WTC11 (cell line): ENCODE measurements at regions of chr1 and their contacts with region 1.

Region 1: DNA sequence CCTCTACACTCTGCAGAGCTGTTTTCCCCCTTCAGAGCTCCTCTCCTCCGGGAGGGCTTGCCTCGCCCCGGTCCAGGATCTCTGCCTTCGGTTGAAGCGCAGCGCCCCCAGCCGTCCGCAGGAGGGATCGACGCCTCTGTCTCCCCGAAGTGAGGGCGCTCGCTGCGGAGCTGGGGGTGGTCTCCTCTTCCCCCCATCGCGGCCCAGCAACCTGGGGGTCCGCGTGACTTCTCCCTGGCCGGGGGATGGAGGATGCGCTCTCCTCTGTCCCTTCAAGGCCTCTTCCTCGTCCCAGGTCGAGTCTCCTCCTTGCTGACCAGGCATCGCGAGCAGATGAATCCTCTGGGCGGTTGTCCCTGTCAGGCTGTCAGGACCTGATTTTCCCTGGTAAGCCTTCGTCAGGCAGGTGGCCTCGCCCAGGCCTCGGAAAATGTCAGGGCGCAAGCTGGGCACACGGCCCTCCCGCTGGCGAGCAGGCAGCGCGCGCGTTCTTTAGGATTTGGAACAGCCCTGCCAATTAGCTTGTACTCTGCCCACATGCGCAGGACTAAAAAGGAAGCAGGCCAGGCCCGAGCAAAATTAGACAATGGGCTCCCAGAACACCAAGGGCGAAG is 90.5 kb downstream of the EDEM3 start:
- DNase-seq: peak; percentile 92
- ATAC-seq: peak; percentile 96
- H3K4me3 Mint-ChIP-seq: peak overlapping the region; percentile 67
- H3K27ac Mint-ChIP-seq: no peak overlapping the region
- H3K4me1 Mint-ChIP-seq: peaks cover 34% of the 10 kb centered on the region
- H3K27me3 Mint-ChIP-seq: peaks cover 8% of the 10 kb centered on the region
- CTCF ChIP-seq: peak; percentile 89

Region 2: GRCh38 chr1:184310157-184310806 is 353.9 kb before region 1 on chr1:
- CTCF ChIA-PET with region 1: interaction called, 15 read pairs
- POLR2A ChIA-PET with region 1: no interaction called
- DNase-seq: no peak
- ATAC-seq: no peak
- H3K4me3 Mint-ChIP-seq: no peak overlapping the region
- H3K27ac Mint-ChIP-seq: no peak overlapping the region
- H3K4me1 Mint-ChIP-seq: peaks cover 5% of the 10 kb centered on the region
- H3K27me3 Mint-ChIP-seq: no peaks in the 10 kb centered on the region
- CTCF ChIP-seq: no peak

Region 3: GRCh38 chr1:184416481-184416880 is 247.7 kb before region 1 on chr1:
- CTCF ChIA-PET with region 1: no interaction called
- POLR2A ChIA-PET with region 1: no interaction called
- DNase-seq: no peak
- ATAC-seq: no peak
- H3K4me3 Mint-ChIP-seq: no peak overlapping the region
- H3K27ac Mint-ChIP-seq: no peak overlapping the region
- H3K4me1 Mint-ChIP-seq: peaks cover 33% of the 10 kb centered on the region
- H3K27me3 Mint-ChIP-seq: no peaks in the 10 kb centered on the region
- CTCF ChIP-seq: no peak

Region 4: DNA sequence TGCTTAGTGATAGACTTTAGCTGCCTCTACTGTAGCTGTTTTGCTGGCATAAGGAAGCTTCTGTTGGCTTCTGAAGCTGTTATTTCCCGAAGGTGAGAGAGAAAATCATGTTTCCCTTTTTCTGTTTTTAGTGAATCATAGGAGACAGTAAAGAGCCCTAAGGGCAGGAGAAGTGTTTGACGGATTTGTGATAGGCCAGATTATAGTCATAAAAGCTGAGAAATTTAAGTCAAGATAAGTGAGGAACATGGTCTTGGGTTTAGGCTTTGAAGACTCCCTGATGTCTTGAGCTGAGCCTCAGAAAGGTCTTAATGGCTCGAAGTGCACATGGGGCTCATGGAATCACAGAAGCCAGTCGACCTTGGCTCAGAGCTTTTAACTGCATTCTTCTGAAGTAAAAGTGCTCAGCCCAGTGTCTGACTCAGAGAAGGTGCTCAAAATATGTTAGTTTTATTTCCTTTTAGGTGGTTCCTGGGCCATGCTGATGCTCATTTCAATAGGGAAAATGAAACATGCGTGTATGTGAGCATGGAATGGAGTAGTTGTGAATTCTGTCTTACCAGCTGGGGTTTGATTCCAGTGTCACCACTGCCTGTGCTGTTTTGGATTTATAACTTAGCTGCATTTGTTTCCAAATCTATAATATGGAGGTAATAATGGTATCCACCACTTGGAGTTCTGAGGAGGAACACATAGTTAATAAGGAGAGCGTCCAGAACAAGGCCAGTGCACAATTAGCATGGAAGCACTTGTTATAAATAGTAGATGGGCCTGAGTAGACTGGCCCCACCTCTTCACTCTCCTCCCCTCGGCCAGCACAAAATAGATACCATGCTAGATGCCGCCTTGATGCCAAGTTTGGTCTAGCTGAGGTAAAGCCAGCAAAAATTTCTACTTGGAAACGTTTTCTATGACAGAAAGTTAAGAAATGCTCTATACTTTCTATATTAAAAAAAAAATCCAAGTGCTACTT is 178.1 kb before region 1 on chr1:
- CTCF ChIA-PET with region 1: interaction called, 15 read pairs
- POLR2A ChIA-PET with region 1: no interaction called
- DNase-seq: no peak
- ATAC-seq: no peak
- H3K4me3 Mint-ChIP-seq: no peak overlapping the region
- H3K27ac Mint-ChIP-seq: peak overlapping the region; percentile 18; the same call in 1 of the 2 replicates
- H3K4me1 Mint-ChIP-seq: peaks cover 66% of the 10 kb centered on the region
- H3K27me3 Mint-ChIP-seq: no peaks in the 10 kb centered on the region
- CTCF ChIP-seq: no peak

Region 5: DNA sequence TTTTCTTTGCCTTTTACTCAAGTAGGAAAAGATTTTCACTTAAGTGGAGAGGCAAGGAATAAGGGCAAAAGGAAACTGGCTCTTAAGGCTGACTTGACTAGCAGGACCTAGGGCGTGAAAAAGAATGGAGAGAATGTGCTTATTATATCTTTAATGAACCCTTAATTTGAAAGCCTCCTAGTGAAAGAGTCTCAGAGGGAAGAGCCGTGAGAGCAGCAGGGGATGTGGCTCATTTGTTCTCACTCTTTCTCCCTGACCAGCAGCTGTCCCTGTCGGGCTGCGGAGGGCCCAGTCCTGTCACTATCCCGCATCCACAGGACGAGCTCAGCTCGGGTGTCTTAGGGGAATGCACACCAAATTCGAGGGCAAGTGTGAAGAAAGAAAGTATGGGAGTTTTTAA is 89.6 kb before region 1 on chr1:
- CTCF ChIA-PET with region 1: interaction called, 18 read pairs
- POLR2A ChIA-PET with region 1: no interaction called
- DNase-seq: peak; percentile 28
- ATAC-seq: peak; percentile 95
- H3K4me3 Mint-ChIP-seq: no peak overlapping the region
- H3K27ac Mint-ChIP-seq: peak overlapping the region; percentile 2; the same call in 1 of the 2 replicates
- H3K4me1 Mint-ChIP-seq: peaks cover 14% of the 10 kb centered on the region
- H3K27me3 Mint-ChIP-seq: no peaks in the 10 kb centered on the region
- CTCF ChIP-seq: no peak

Region 6: GRCh38 chr1:184620469-184620868 is 43.7 kb before region 1 on chr1:
- CTCF ChIA-PET with region 1: interaction called, 12 read pairs
- POLR2A ChIA-PET with region 1: interaction called, 10 read pairs
- DNase-seq: no peak
- ATAC-seq: no peak
- H3K4me3 Mint-ChIP-seq: no peak overlapping the region
- H3K27ac Mint-ChIP-seq: no peak overlapping the region
- H3K4me1 Mint-ChIP-seq: peaks cover 4% of the 10 kb centered on the region; the same call in 1 of the 2 replicates
- H3K27me3 Mint-ChIP-seq: no peaks in the 10 kb centered on the region
- CTCF ChIP-seq: no peak

Region 7: GRCh38 chr1:184677344-184677743 is 13.2 kb after region 1 on chr1:
- CTCF ChIA-PET with region 1: interaction called, 36 read pairs
- POLR2A ChIA-PET with region 1: no interaction called
- DNase-seq: no peak
- ATAC-seq: no peak
- H3K4me3 Mint-ChIP-seq: no peak overlapping the region
- H3K27ac Mint-ChIP-seq: no peak overlapping the region
- H3K4me1 Mint-ChIP-seq: peaks cover 17% of the 10 kb centered on the region
- H3K27me3 Mint-ChIP-seq: peaks cover 2% of the 10 kb centered on the region; the same call in 1 of the 2 replicates
- CTCF ChIP-seq: no peak

Region 8: GRCh38 chr1:184724843-184725242 is 60.7 kb after region 1 on chr1:
- CTCF ChIA-PET with region 1: no interaction called
- POLR2A ChIA-PET with region 1: no interaction called
- DNase-seq: no peak
- ATAC-seq: no peak
- H3K4me3 Mint-ChIP-seq: no peak overlapping the region
- H3K27ac Mint-ChIP-seq: no peak overlapping the region
- H3K4me1 Mint-ChIP-seq: no peaks in the 10 kb centered on the region
- H3K27me3 Mint-ChIP-seq: no peaks in the 10 kb centered on the region
- CTCF ChIP-seq: no peak